ENCODE measurements at regions of chr12 and their contacts with region 1.

Region 1: GRCh38 chr12:29008786-29009185 is 140.3 kb upstream of the FAR2 start:
- DNase-seq: no peak
- ATAC-seq: no peak
- H3K4me3 Mint-ChIP-seq: no peak overlapping the region
- H3K27ac Mint-ChIP-seq: no peak overlapping the region
- H3K4me1 Mint-ChIP-seq: no peaks in the 10 kb centered on the region
- H3K27me3 Mint-ChIP-seq: peaks cover 8% of the 10 kb centered on the region

Region 2: GRCh38 chr12:29054858-29055663 is 46.3 kb after region 1 on chr12:
- CTCF ChIA-PET with region 1: no interaction called
- POLR2A ChIA-PET with region 1: interaction called, 11 read pairs
- intact Hi-C with region 1: no loop called
- DNase-seq: no peak
- ATAC-seq: no peak
- H3K4me3 Mint-ChIP-seq: no peak overlapping the region
- H3K27ac Mint-ChIP-seq: no peak overlapping the region
- H3K4me1 Mint-ChIP-seq: no peaks in the 10 kb centered on the region
- H3K27me3 Mint-ChIP-seq: peaks cover 11% of the 10 kb centered on the region